MCF 10A (cell line): ENCODE measurements at regions of chr17 and their contacts with region 1.

Region 1: DNA sequence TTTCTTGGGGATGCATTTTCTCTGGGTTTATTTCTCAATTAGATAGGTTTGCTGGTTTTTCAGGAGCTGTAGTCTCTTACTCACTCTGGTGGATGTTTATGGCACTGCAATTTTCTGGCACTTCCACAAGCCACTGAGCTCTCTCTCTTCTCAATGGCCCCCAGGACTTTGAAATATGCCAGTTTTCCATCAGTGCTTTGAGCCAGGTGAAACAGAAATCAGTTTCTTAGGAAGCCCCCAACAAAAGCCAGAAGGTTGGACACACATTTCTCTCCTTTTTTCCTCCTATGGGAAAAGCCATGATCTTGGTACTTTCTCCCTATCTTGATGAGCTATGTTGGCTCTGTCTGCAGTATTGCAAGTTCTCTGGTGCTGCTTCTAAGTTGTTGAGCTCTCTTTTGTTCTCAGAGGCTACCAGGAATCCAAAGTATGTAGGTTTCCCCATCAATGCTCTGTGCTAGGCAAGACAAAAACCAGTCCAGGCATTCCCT is 90.7 kb upstream of the SMIM36 start:
- DNase-seq: peak; percentile 57
- H3K4me3 Mint-ChIP-seq: no peak overlapping the region
- H3K27ac Mint-ChIP-seq: no peak overlapping the region
- H3K4me1 Mint-ChIP-seq: no peaks in the 10 kb centered on the region
- H3K27me3 Mint-ChIP-seq: no peaks in the 10 kb centered on the region
- CTCF ChIP-seq: peak; percentile 67

Region 2: GRCh38 chr17:55426546-55427410 is 175.1 kb before region 1 on chr17:
- CTCF ChIA-PET with region 1: no interaction called
- POLR2A ChIA-PET with region 1: no interaction called
- intact Hi-C with region 1: no loop called
- DNase-seq: peak; percentile 56
- H3K4me3 Mint-ChIP-seq: no peak overlapping the region
- H3K27ac Mint-ChIP-seq: no peak overlapping the region
- H3K4me1 Mint-ChIP-seq: peaks cover 13% of the 10 kb centered on the region
- H3K27me3 Mint-ChIP-seq: peaks cover 26% of the 10 kb centered on the region
- CTCF ChIP-seq: no peak

Region 3: DNA sequence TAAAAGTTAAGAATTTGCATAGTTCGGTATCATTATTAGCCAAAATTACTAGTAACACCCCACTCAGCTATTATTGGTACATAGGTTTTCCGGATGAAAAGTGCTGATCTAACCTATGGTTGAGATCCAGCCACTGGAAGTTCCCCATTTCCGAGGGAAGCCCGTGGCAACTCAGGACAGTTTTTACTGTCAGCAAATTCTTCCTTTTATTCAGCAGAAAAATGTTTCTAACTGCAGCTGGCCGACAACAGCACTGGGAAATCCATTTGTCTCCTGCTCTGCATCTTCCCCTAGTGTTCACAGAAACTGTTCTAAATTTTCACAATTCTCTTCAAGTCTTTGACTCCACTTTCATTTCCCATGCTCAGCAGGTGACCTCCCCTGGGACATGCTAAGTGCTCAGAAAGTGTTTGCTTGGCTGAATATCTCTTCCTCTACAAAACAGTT is 164.7 kb before region 1 on chr17:
- CTCF ChIA-PET with region 1: no interaction called
- POLR2A ChIA-PET with region 1: no interaction called
- intact Hi-C with region 1: no loop called
- DNase-seq: no peak
- H3K4me3 Mint-ChIP-seq: peak overlapping the region; percentile 50
- H3K27ac Mint-ChIP-seq: no peak overlapping the region
- H3K4me1 Mint-ChIP-seq: peaks cover 38% of the 10 kb centered on the region
- H3K27me3 Mint-ChIP-seq: no peaks in the 10 kb centered on the region
- CTCF ChIP-seq: no peak

Region 4: GRCh38 chr17:55540414-55541091 is 61.4 kb before region 1 on chr17:
- CTCF ChIA-PET with region 1: interaction called, 10 read pairs
- POLR2A ChIA-PET with region 1: no interaction called
- intact Hi-C with region 1: no loop called
- DNase-seq: peak; percentile 63
- H3K4me3 Mint-ChIP-seq: no peak overlapping the region
- H3K27ac Mint-ChIP-seq: peak overlapping the region; percentile 40
- H3K4me1 Mint-ChIP-seq: peaks cover 13% of the 10 kb centered on the region
- H3K27me3 Mint-ChIP-seq: no peaks in the 10 kb centered on the region
- CTCF ChIP-seq: no peak

Region 5: DNA sequence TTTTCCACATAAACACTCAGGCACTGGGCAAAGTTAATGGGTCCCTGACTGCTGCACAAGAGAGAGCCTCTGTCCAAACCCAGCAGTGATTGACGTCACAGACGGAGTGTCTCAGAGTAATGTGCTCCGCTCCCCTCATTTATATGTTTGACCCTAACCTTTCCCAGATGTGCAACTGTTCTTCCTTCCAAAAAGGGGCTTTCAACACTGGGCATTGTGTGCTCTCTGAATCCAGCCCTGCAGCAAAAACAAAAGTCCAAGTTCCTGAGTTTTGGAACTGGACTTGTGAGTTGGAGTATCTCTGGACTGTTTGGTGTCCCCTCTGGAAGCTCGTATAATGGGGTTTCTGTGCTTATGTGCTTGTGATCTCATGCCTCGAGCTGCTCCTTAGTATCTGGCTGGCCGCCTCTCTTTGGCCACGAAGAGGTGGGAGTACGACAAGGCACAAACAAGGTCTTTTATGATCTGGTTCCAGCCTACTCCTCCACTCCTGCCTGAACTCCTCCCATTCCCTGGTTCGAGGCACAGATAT is 14.2 kb before region 1 on chr17:
- CTCF ChIA-PET with region 1: interaction called, 14 read pairs
- POLR2A ChIA-PET with region 1: no interaction called
- intact Hi-C with region 1: no loop called
- DNase-seq: no peak
- H3K4me3 Mint-ChIP-seq: no peak overlapping the region
- H3K27ac Mint-ChIP-seq: peak overlapping the region; percentile 52
- H3K4me1 Mint-ChIP-seq: peaks cover 23% of the 10 kb centered on the region
- H3K27me3 Mint-ChIP-seq: no peaks in the 10 kb centered on the region
- CTCF ChIP-seq: no peak

Region 6: DNA sequence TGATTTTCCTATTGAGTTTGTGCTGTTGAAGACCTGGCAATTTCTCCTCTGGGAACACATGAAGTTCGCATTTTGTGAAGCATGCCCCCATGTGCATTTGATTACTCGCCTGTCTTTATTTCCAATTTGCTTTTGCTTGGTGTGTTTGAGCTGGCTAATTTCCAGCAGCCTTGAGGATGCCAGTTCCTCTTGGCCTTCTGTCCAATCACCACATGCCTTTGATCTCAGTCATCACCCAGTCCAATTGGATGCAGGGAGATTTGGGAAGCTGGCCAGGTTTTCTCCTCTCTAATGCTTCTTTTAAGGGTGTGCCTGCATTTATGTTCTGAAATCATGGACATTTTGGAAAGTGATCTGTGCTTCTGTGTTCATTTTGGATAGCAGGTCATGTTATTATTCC is 124.5 kb after region 1 on chr17:
- CTCF ChIA-PET with region 1: interaction called, 17 read pairs
- POLR2A ChIA-PET with region 1: interaction called, 3 read pairs
- intact Hi-C with region 1: no loop called
- DNase-seq: peak; percentile 94
- H3K4me3 Mint-ChIP-seq: peak overlapping the region; percentile 63
- H3K27ac Mint-ChIP-seq: peak overlapping the region; percentile 93
- H3K4me1 Mint-ChIP-seq: peaks cover 68% of the 10 kb centered on the region
- H3K27me3 Mint-ChIP-seq: no peaks in the 10 kb centered on the region
- CTCF ChIP-seq: no peak

Region 7: GRCh38 chr17:55825213-55825612 is 223.3 kb after region 1 on chr17:
- CTCF ChIA-PET with region 1: interaction called, 6 read pairs
- POLR2A ChIA-PET with region 1: no interaction called
- intact Hi-C with region 1: loop called (anchors 2 kb)
- DNase-seq: peak; percentile 41
- H3K4me3 Mint-ChIP-seq: no peak overlapping the region
- H3K27ac Mint-ChIP-seq: no peak overlapping the region
- H3K4me1 Mint-ChIP-seq: no peaks in the 10 kb centered on the region
- H3K27me3 Mint-ChIP-seq: no peaks in the 10 kb centered on the region
- CTCF ChIP-seq: peak; percentile 16